Sigmoid colon (tissue), 7 donors: ENCODE measurements at regions of chr16 and their contacts with region 1.

Region 1: GRCh38 chr16:3282730-3283524 is at the start of gene ZNF263:
- DNase-seq: peak; percentile 98
- H3K4me3 ChIP-seq: peak within 1 kb of the TSS; percentile 68 to 99 (median 96)
- H3K27ac ChIP-seq: peak within 1 kb of the TSS; percentile 94 to 100 (median 99)
- H3K4me1 ChIP-seq: peaks cover 0 to 37% (median 29%) of the 10 kb centered on the region in 4 donors
- H3K27me3 ChIP-seq: no peaks in the 10 kb centered on the region
- CTCF ChIP-seq: no peak
- EP300 ChIP-seq: peak in 1 of 4 donors; percentile 28
- POLR2A ChIP-seq: peak; percentile 23 to 68
- total RNA-seq, gene ZNF263: 27.5 to 51.3 (median 33.4) TPM

Region 2: GRCh38 chr16:3150346-3151218 is 132.3 kb before region 1 on chr16:
- intact Hi-C with region 1: loop called (anchors 5 kb)
- DNase-seq: peak; percentile 97
- H3K4me3 ChIP-seq: peak overlapping the region; percentile 47 to 72 (median 66)
- H3K27ac ChIP-seq: peak overlapping the region; percentile 80 to 93 (median 88)
- H3K4me1 ChIP-seq: peaks cover 0 to 28% (median 24%) of the 10 kb centered on the region in 4 donors
- H3K27me3 ChIP-seq: no peaks in the 10 kb centered on the region
- CTCF ChIP-seq: no peak
- EP300 ChIP-seq: no peak
- POLR2A ChIP-seq: no peak

Region 3: GRCh38 chr16:3264137-3265036 is 18.5 kb before region 1 on chr16:
- intact Hi-C with region 1: loop called (anchors 1 kb)
- DNase-seq: peak; percentile 99
- H3K4me3 ChIP-seq: peak overlapping the region; percentile 60 to 98 (median 86)
- H3K27ac ChIP-seq: peak overlapping the region; percentile 90 to 100 (median 97)
- H3K4me1 ChIP-seq: peaks cover 0 to 21% (median 20%) of the 10 kb centered on the region in 4 donors
- H3K27me3 ChIP-seq: no peaks in the 10 kb centered on the region
- CTCF ChIP-seq: peak in 2 of 4 experiments; percentile 13 to 18
- EP300 ChIP-seq: no peak
- POLR2A ChIP-seq: peak; percentile 87 to 91

Region 4: GRCh38 chr16:3364774-3365427 is 82.0 kb after region 1 on chr16:
- intact Hi-C with region 1: loop called (anchors 5 kb)
- DNase-seq: peak; percentile 94
- H3K4me3 ChIP-seq: peak overlapping the region; percentile 20 to 55 (median 50)
- H3K27ac ChIP-seq: peak overlapping the region; percentile 66 to 88 (median 82)
- H3K4me1 ChIP-seq: no peaks in the 10 kb centered on the region
- H3K27me3 ChIP-seq: peaks cover 0 to 8% (median 0%) of the 10 kb centered on the region in 3 donors
- CTCF ChIP-seq: no peak
- EP300 ChIP-seq: peak in 1 of 4 donors; percentile 31
- POLR2A ChIP-seq: no peak

Region 5: GRCh38 chr16:3503523-3503922 is 220.6 kb after region 1 on chr16:
- intact Hi-C with region 1: loop called (anchors 5 kb)
- DNase-seq: peak; percentile 37
- H3K4me3 ChIP-seq: no peak overlapping the region
- H3K27ac ChIP-seq: no peak overlapping the region
- H3K4me1 ChIP-seq: peaks cover 0 to 23% (median 17%) of the 10 kb centered on the region in 4 donors
- H3K27me3 ChIP-seq: no peaks in the 10 kb centered on the region
- CTCF ChIP-seq: no peak
- EP300 ChIP-seq: no peak
- POLR2A ChIP-seq: no peak